Posterior cingulate gyrus (tissue), 11 donors: ENCODE measurements at regions of chr13 and their contacts with region 1.

Region 1: DNA sequence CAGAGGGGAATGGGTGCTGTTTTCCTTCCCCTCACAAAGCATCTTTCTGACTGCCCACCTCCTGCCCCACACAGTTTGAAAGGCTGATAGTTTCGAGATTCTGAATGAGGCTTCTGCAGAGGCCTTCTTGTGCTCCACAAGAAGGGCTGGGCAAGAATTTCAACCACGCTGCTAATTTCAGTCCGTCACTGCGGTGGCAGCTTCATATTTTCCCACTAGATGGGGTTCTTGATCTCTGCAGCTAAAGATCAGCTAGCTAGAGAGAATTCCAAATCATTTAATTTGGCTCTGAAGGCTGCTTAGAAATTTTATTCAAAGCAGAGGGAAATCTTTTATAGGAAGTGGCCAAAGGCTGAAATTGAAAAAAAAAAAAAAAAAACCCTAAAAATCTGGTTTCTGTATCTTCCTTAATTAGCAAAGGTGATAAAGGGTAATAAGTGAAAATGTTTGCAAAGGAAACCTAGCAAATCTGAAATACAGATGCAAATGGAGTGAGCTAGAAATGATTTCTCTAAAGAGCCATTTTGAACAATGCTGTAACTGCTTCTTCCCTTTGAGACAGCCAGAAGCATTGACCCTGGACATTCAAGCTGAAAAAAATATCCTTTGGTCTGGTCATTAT is 38.0 kb upstream of the C13orf42 start:
- DNase-seq: peak in 9 of 10 donors; percentile 23 to 91 (median 55)

Region 2: DNA sequence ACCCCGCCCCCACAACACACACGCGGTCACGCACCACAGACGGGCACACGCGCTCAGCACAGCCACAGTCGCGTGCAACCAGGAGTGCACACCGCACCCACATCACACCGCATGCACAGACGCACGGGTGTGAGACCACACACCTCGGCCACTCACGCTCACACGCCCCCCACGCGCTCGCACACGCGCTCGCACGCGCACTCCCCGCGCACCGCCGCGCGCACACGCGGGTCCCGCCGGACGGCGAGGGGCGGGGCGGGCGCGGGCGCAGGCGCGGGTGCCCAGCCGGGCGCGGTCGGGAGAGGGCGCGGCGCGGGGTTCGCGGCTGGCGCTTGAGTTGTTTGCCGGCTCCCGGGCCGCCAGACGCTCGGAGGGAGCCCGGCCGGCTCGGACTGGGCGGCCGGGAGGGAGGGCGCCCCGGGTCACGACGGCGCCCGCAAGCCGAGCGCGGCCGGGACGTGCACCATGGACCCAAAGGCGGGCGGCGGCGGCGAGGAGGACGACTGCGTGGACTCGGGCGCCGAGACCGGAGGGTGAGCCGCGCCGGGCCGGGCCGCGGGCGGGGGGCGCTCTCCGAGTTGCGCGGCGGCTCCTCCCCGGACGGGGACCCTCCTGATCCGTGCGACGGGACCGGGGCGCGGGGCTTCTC is 73.1 kb after region 1 on chr13 and contains the start of gene FAM124A:
- intact Hi-C with region 1: loop called (anchors 1 kb)
- DNase-seq: peak; percentile 47 to 96 (median 56)

Region 3: DNA sequence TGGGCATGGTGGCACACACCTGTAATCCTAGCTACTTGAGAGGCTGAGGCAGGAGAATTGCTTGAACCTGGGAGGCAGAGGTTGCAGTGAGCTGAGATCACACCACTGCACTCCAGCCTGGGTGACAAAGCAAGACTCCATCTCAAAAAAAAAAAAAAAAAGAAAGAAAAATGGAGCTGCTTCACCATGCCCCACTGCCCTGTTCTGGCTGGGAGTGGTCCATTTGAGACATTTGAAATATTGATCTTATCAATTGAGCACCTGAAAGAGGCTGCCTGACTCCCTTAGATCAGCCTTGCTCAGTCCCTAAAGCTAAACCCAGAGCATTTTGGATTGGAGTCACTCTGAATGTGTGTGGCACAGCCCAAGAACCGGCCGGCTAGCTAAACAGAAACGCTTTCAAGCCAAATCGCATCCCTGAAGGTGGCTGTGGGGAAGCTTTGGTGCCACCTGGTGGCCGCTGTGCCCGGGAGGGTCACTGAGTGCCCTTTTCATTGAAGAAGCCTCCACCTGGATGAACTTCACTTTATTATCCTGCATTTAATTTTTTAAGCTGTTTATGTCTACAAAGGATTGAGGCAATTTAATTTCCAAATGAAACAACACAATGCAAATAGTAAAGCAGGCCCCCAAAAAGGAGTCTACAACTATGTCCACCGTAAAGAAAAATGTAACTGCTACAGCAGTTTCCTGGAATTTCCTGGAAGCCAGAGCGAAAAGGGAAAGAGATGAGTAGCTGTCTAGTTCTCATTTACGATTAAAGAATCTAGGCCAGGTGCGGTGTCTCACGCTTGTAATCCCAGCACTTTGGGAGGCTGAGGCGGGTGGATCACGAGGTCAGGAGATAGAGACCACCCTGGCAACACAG is 137.3 kb after region 1 on chr13:
- intact Hi-C with region 1: loop called (anchors 1 kb)
- DNase-seq: peak; percentile 75 to 97 (median 90)

Region 4: GRCh38 chr13:51425410-51426042 is 276.5 kb after region 1 on chr13:
- intact Hi-C with region 1: loop called (anchors 10 kb)
- DNase-seq: no peak